ENCODE measurements at regions of chr4 and their contacts with region 1.

Region 1: DNA sequence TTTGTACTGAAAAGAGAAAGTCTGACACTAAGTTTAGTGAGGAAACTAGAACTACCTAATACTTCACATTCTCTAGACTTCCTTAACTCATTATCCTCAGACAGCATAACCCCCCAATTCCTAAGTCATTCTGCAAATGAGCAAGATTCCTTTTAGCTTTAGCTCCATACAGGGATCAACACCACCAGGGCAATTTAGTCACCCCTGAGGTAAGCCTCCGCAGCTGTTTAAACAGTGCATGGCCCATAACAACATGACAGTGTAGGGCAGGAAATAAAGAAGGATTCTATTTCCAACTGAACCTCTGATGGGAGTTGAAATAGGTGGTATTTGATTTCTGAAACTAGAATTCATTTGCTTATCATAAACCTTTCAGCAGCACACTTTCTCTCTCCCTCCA is 112.8 kb upstream of the DKK2 start:
- DNase-seq: no peak
- ATAC-seq: no peak
- H3K4me3 Mint-ChIP-seq: no peak overlapping the region
- H3K27ac Mint-ChIP-seq: no peak overlapping the region
- H3K4me1 Mint-ChIP-seq: peaks cover 2% of the 10 kb centered on the region
- H3K27me3 Mint-ChIP-seq: peaks cover 4% of the 10 kb centered on the region

Region 2: DNA sequence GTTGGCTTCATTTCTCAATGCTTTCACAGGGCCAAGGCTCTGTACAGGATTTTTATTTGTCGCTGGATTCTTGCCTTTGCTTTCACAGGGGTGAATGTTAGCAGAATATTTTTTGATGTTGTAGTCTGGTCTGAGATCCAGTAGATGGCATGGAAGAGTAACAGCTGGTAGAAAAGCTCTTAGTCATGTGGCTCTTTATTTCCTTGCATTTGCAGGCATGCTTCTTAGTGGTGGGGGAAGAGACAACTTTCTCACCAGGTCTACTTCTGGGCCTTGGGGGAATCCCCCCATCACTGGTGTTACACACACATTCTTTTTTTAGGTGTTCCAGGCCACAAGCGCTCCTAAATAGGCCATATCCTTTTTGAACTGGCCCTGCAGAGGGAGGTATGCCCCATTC is 54.6 kb before region 1 on chr4:
- CTCF ChIA-PET with region 1: no interaction called
- POLR2A ChIA-PET with region 1: no interaction called
- intact Hi-C with region 1: loop called in 1 of 2 experiments (anchors 1 kb)
- DNase-seq: no peak
- ATAC-seq: peak; percentile 39
- H3K4me3 Mint-ChIP-seq: no peak overlapping the region
- H3K27ac Mint-ChIP-seq: no peak overlapping the region
- H3K4me1 Mint-ChIP-seq: no peaks in the 10 kb centered on the region
- H3K27me3 Mint-ChIP-seq: no peaks in the 10 kb centered on the region

Measured in activated CD4-positive, alpha-beta T cell treated with anti-CD3 and anti-CD28 coated beads for 36 hours (primary cell).